GM12878 (cell line): ENCODE measurements at regions of chr18 and their contacts with region 1.

Region 1: DNA sequence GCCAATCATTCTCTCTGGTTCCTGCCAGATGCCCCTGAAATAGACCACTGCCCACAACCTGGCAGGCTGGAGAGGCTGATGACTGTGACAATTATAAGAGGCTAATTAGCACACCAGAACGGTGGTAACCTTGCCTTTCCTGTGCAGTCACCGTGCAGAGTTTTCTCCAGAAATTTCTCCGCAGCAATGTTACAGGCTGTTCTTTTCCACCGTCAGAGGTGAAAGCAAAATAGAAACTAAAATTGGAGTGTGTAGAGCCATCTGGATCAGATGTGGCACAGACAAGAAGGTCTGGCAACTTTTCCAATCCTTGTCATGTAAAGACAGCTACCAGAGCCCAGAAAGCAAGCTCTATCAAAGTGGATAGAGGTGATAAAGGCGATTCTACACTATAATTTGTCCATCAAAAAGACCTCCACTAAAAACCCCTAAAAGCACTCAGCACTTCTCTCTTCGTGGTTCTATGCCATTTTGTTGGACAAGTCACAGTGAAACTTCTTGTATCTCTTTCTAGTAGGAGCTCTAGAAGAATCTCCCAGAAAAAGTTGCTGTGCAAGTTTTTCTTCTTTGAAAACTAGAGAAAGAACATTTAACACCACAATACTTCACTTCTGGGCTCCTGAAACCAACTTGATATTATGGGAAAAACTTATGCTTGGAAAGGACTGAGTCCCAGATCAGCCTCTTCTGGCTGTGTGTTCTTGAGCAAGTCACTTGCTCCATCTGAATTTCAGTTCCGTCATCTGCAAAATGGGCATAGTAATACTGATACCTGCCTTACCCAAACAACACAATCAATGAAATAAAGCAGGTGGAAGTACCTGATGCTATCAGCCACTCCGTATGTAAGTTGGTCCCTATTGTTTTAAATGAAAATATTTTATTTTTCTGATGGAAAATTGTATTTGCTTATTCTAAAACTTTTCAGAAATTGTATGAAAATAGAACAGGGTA is 295.6 kb upstream of the DLGAP1 start:
- DNase-seq: no peak
- ATAC-seq: peak; percentile 64
- H3K4me3 ChIP-seq: no peak overlapping the region
- H3K27ac ChIP-seq: no peak overlapping the region
- H3K4me1 ChIP-seq: no peaks in the 10 kb centered on the region
- H3K27me3 ChIP-seq: no peaks in the 10 kb centered on the region
- CTCF ChIP-seq: no peak
- EP300 ChIP-seq: no peak
- POLR2A ChIP-seq: no peak
- RAD21 ChIP-seq: no peak

Region 2: GRCh38 chr18:4677006-4677405 is 73.7 kb before region 1 on chr18:
- CTCF ChIA-PET with region 1: no interaction called
- POLR2A ChIA-PET with region 1: no interaction called
- RAD21 ChIA-PET with region 1: no interaction called
- SMC1A ChIA-PET with region 1: interaction called, 11 read pairs
- in situ Hi-C with region 1: no loop called
- intact Hi-C with region 1: no loop called
- DNase-seq: no peak
- ATAC-seq: no peak
- H3K4me3 ChIP-seq: no peak overlapping the region
- H3K27ac ChIP-seq: no peak overlapping the region
- H3K4me1 ChIP-seq: no peaks in the 10 kb centered on the region
- H3K27me3 ChIP-seq: no peaks in the 10 kb centered on the region
- CTCF ChIP-seq: no peak
- EP300 ChIP-seq: no peak
- POLR2A ChIP-seq: no peak
- RAD21 ChIP-seq: no peak

Region 3: DNA sequence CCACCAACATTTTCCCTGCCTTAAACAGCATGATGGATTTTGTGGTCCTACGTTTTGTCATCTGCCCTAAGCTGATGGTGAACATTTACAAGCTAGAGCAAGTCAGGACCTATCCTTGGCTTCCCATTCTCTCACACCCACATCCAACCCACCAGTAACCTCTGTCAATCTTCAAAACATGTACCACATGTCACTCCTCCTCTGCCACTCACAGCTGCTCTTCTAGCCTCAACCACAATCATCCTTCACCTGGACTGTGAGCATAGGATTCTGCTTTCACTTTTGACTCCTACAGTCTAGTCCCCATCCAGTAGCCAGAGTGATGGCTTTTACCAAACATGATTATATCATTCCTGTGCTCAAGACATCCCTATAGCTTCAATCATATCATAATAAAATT is 15.8 kb before region 1 on chr18:
- CTCF ChIA-PET with region 1: interaction called, 3 read pairs
- POLR2A ChIA-PET with region 1: interaction called, 3 read pairs
- RAD21 ChIA-PET with region 1: interaction called, 3 read pairs
- SMC1A ChIA-PET with region 1: interaction called, 17 read pairs
- in situ Hi-C with region 1: no loop called
- intact Hi-C with region 1: no loop called
- DNase-seq: no peak
- ATAC-seq: peak; percentile 43; the same call in 2 of the 3 replicates
- H3K4me3 ChIP-seq: no peak overlapping the region
- H3K27ac ChIP-seq: no peak overlapping the region
- H3K4me1 ChIP-seq: no peaks in the 10 kb centered on the region
- H3K27me3 ChIP-seq: no peaks in the 10 kb centered on the region
- CTCF ChIP-seq: no peak
- EP300 ChIP-seq: no peak
- POLR2A ChIP-seq: no peak
- RAD21 ChIP-seq: no peak

Region 4: GRCh38 chr18:5021558-5021957 is 270.9 kb after region 1 on chr18:
- CTCF ChIA-PET with region 1: interaction called, 10 read pairs
- POLR2A ChIA-PET with region 1: no interaction called
- RAD21 ChIA-PET with region 1: interaction called, 3 read pairs
- SMC1A ChIA-PET with region 1: no interaction called
- in situ Hi-C with region 1: no loop called
- intact Hi-C with region 1: no loop called
- DNase-seq: no peak
- ATAC-seq: peak; percentile 83
- H3K4me3 ChIP-seq: no peak overlapping the region
- H3K27ac ChIP-seq: no peak overlapping the region
- H3K4me1 ChIP-seq: no peaks in the 10 kb centered on the region
- H3K27me3 ChIP-seq: no peaks in the 10 kb centered on the region
- CTCF ChIP-seq: no peak
- EP300 ChIP-seq: no peak
- POLR2A ChIP-seq: no peak
- RAD21 ChIP-seq: no peak